AG04450 (cell line): ENCODE measurements at regions of chr7 and their contacts with region 1.

Region 1: DNA sequence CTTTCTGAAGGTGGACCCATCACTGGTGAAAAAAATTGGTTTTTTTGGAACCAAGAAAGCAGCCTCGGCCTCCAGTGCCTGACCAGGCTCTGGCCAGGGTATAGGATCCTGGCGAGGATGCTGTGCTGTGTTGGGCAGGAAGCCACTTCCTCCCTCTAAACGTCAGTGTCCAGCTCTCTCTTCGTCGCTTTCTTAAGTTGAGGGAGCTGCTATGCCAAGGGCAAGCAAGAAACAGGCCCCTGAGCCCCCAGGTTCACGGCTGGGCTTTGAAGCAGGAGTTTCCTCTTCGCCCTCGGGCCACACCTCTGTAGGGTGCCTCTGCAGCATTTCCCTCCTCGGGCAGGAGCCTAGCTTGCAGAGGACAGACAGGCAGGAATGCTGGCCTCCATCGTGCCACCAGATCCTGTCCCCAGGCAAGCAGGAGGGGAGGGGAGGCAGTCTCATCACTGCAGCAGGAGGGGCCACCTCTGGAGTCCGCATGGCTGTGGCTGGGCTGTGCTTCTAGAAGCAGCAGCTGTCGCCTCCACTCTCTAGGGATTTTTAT is 181.3 kb downstream of the CUX1 start:
- DNase-seq: no peak
- H3K4me3 ChIP-seq: no peak overlapping the region
- H3K27ac ChIP-seq: no peak overlapping the region
- H3K27me3 ChIP-seq: no peaks in the 10 kb centered on the region
- CTCF ChIP-seq: no peak

Region 2: DNA sequence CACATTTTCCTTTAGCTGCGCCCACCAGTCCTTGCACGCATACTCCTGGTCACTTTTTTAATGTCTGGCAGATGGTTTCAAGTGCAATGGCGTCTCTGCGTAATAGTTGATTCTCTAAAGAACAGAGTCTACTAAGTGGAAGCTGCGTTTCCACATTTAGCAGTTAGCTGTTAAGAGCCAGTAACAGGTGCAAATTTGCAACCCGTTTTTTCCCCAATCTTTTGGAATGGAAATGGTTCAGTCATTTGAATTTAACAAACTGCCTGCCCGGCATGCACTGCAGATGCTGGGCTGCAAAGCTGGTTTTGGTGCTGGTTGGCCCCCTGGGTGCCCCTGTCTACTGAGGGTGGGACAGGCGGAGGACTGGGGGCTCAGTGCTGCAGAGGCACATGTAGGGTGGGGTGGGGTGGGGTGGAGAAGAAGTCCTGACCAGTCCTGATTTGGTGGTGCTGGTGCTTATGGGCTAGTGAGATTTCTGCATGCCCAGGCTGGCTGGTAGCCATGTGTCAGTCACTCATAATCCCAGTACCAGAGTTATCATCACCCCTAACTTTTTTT is 137.4 kb before region 1 on chr7:
- CTCF ChIA-PET with region 1: interaction called, 10 read pairs
- POLR2A ChIA-PET with region 1: no interaction called
- DNase-seq: no peak
- H3K4me3 ChIP-seq: no peak overlapping the region
- H3K27ac ChIP-seq: no peak overlapping the region
- H3K27me3 ChIP-seq: no peaks in the 10 kb centered on the region
- CTCF ChIP-seq: no peak

Region 3: GRCh38 chr7:101941481-101942383 is 57.0 kb before region 1 on chr7:
- CTCF ChIA-PET with region 1: no interaction called
- POLR2A ChIA-PET with region 1: no interaction called
- DNase-seq: no peak
- H3K4me3 ChIP-seq: no peak overlapping the region
- H3K27ac ChIP-seq: peak overlapping the region; percentile 39
- H3K27me3 ChIP-seq: no peaks in the 10 kb centered on the region
- CTCF ChIP-seq: no peak

Region 4: DNA sequence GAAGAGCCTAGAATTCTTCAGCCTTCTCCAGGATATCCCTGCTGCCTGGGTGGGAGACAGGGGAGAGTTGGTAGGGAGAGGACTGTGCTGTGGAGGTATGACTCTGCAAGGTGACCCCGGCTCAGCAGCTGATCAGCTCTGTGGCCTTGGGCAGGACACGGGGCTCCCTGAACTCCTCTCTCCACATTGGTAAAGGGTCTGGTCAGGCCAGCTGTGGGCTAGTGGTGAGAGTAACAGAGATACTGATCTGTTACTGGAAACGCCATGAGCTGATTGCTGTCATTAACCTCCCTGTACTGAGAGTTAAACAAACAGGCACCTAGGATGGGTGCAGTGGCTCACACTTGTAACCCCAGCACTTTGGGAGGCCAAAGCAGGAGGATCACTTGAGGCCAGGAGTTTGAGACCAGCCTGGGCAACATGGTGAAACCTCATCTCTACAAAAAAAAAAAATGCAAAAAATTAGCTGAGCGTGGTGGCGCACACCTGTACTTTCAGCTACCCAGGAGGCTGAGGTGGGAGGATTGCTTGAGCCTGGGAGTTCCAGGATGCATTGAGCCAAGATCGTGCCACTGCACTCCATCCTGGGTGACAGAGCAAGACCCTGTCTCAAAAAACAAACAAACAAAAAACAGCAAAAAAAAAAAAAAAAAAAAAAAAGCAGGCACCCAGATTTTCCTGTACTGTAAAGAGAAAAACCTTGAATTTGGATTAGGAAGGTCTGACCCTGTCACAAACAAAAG is 29.8 kb before region 1 on chr7:
- CTCF ChIA-PET with region 1: no interaction called
- POLR2A ChIA-PET with region 1: no interaction called
- DNase-seq: no peak
- H3K4me3 ChIP-seq: no peak overlapping the region
- H3K27ac ChIP-seq: no peak overlapping the region
- H3K27me3 ChIP-seq: no peaks in the 10 kb centered on the region
- CTCF ChIP-seq: no peak

Region 5: DNA sequence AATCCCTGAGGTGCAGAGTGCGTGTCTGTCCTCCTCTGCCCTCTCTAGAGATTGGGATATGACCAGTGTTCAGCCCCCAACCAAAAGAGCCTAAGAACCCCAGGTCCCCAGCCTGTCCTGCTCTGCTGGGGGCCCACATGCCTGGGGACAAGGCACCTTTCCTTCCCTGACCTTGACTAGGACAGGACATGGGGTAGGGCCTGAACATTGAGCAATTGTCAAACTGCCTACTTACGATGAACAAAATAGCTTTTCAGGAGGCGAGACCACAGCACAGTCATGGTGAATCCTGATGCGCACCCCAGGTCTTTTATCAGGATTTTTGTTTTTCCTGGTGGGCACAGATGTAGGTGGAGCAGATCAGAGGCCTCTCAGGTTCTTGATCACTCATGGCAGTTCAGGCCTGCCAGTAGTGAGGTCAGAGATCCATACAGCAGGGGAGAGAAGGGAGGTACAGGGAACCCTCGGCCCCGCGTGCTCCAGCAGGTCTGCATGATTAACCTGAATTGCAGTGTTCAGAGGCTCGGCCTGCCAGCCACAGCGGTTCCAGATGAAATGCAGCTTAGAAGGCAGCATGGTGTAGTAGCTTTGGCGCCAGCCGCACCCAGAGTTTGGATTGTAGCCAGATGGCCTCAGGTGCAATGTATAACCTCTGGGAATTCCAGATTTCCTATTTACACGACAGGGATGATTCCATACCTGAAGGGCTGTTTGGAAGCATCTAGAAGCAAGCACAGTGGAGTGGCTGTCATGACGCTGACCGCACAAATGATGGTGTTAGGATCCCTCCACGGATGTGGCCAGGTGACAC is 10.0 kb after region 1 on chr7:
- CTCF ChIA-PET with region 1: no interaction called
- POLR2A ChIA-PET with region 1: no interaction called
- DNase-seq: no peak
- H3K4me3 ChIP-seq: no peak overlapping the region
- H3K27ac ChIP-seq: no peak overlapping the region
- H3K27me3 ChIP-seq: no peaks in the 10 kb centered on the region
- CTCF ChIP-seq: no peak